WTC11 (cell line): ENCODE measurements at regions of chr17 and their contacts with region 1.

Region 1: GRCh38 chr17:78186692-78187595 is at the starts of genes AFMID and TK1:
- DNase-seq: peak; percentile 100
- ATAC-seq: peak; percentile 96
- H3K4me3 Mint-ChIP-seq: peak within 1 kb of the TSS; percentile 82
- H3K27ac Mint-ChIP-seq: peak within 1 kb of the TSS; percentile 83
- H3K4me1 Mint-ChIP-seq: peaks cover 28% of the 10 kb centered on the region
- H3K27me3 Mint-ChIP-seq: no peaks in the 10 kb centered on the region
- CTCF ChIP-seq: peak; percentile 73; the same call in 1 of the 2 replicates
- total RNA-seq, gene AFMID: 45.1 to 58.7 TPM (median 48.8 TPM) in 3 replicates
- total RNA-seq, gene TK1: 72.5 to 84.1 TPM (median 82.6 TPM) in 3 replicates

Region 2: DNA sequence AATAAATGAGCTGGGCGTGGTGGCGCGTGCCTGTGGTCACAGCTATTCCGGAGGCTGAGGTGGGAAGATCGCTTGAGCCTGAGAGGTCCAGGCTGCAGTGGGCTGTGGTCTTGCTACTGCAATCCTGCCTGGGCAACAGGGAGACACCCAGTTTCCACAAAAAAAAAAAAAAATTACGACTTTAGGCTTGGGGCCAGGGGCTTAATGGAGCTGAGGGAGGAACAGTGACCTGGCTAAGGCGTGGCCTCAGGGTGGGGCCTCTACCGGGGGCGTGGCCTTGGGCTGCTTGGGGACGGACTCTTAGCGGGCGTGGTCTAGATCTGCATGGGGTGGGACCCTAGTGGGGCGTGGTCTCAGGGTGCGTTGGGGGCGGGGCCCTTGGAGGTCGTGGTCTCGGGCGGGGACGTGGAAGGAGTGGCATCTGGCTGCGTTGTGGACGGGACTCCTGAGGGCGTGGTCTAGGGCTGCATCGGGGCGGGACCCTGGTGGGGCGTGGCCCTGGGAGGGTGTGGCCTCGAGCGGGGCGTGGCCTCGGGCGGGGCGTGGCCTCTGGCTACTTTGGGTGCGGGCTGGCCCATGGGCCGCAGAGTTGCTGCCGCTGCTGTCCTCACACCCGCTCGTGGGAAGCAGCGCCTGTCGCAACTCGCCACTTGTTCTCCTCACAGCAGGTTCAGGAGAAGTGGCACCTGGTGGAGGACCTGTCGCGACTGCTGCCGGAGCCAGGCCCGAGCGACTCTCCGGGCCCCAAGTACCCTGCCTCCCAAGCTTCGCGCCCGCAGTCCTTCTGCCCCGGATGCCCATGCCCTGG is 46.6 kb before region 1 on chr17:
- CTCF ChIA-PET with region 1: interaction called, 15 read pairs
- POLR2A ChIA-PET with region 1: interaction called, 4 read pairs
- DNase-seq: peak; percentile 100
- ATAC-seq: peak; percentile 94
- H3K4me3 Mint-ChIP-seq: peak overlapping the region; percentile 43
- H3K27ac Mint-ChIP-seq: peak overlapping the region; percentile 72; the same call in 1 of the 2 replicates
- H3K4me1 Mint-ChIP-seq: peaks cover 19% of the 10 kb centered on the region
- H3K27me3 Mint-ChIP-seq: 0 out of 2 replicates have a peak, but pooled peaks cover 3% of the 10 kb centered on the region
- CTCF ChIP-seq: no peak

Region 3: DNA sequence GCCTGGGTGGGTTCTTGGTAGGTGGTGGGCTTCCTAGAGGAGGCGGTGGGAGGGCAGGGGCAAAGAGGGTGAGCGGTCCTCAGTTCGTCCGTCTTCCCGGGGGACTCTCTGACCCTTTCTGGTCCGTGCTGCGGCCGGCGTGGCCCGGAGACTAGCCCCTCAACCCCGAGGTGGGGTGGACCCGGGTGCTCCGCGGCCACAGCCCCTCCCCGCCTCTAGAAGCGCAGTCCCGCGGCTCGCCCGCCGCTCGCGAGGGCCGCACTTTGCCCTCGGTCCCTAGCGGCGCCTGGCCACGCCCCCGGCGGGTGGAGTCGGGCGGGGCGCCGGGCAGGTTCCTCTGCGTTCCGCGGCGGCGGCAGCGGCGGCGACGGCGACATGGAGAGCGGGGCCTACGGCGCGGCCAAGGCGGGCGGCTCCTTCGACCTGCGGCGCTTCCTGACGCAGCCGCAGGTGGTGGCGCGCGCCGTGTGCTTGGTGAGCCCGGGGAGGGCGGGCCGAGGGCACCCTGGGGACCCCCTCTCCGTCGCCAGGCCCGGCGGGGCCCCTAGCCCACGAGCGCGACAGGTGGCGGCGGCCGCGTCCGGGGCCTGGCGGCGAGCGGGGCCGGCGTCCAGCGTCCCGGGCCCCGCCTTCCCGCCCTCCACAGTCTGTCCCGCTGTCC is 18.6 kb before region 1 on chr17 and contains the start of gene SYNGR2:
- CTCF ChIA-PET with region 1: interaction called, 27 read pairs
- POLR2A ChIA-PET with region 1: interaction called, 7 read pairs
- DNase-seq: peak; percentile 91
- ATAC-seq: peak; percentile 62
- H3K4me3 Mint-ChIP-seq: peak within 1 kb of the TSS; percentile 70
- H3K27ac Mint-ChIP-seq: no peak within 1 kb of the TSS
- H3K4me1 Mint-ChIP-seq: peaks cover 36% of the 10 kb centered on the region
- H3K27me3 Mint-ChIP-seq: no peaks in the 10 kb centered on the region
- CTCF ChIP-seq: no peak
- total RNA-seq, gene SYNGR2: 47.7 to 50.3 TPM (median 50.2 TPM) in 3 replicates

Region 4: GRCh38 chr17:78197147-78197832 is 10.3 kb after region 1 on chr17:
- CTCF ChIA-PET with region 1: interaction called, 26 read pairs
- POLR2A ChIA-PET with region 1: interaction called, 10 read pairs
- DNase-seq: no peak
- ATAC-seq: peak; percentile 34
- H3K4me3 Mint-ChIP-seq: no peak overlapping the region
- H3K27ac Mint-ChIP-seq: peak overlapping the region; percentile 66; the same call in 1 of the 2 replicates
- H3K4me1 Mint-ChIP-seq: peaks cover 29% of the 10 kb centered on the region
- H3K27me3 Mint-ChIP-seq: no peaks in the 10 kb centered on the region
- CTCF ChIP-seq: no peak

Region 5: DNA sequence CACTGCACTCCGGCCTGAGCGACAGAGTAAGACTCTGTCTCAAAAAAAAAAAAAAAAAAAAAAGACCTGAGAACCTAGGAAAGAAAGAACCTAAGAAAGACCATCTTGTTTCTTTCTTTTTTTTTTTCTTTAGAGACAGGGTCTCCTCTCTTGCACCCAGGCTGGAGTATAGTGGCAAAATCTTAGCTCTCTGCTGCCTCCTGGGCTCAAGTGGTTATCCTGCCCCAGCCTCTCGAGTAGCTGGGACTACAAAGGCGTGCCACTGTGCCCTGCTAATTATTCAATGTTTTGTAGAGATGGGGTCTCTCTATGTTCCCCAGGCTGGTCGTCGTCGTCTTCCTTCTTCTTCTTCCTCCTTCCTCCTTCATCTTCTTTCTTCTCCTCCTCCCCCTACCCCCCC is 19.4 kb after region 1 on chr17:
- CTCF ChIA-PET with region 1: interaction called, 26 read pairs
- POLR2A ChIA-PET with region 1: interaction called, 13 read pairs
- DNase-seq: no peak
- ATAC-seq: peak; percentile 88
- H3K4me3 Mint-ChIP-seq: no peak overlapping the region
- H3K27ac Mint-ChIP-seq: no peak overlapping the region
- H3K4me1 Mint-ChIP-seq: no peaks in the 10 kb centered on the region
- H3K27me3 Mint-ChIP-seq: no peaks in the 10 kb centered on the region
- CTCF ChIP-seq: no peak